ENCODE measurements at regions of chr1 and their contacts with region 1.

Region 1: DNA sequence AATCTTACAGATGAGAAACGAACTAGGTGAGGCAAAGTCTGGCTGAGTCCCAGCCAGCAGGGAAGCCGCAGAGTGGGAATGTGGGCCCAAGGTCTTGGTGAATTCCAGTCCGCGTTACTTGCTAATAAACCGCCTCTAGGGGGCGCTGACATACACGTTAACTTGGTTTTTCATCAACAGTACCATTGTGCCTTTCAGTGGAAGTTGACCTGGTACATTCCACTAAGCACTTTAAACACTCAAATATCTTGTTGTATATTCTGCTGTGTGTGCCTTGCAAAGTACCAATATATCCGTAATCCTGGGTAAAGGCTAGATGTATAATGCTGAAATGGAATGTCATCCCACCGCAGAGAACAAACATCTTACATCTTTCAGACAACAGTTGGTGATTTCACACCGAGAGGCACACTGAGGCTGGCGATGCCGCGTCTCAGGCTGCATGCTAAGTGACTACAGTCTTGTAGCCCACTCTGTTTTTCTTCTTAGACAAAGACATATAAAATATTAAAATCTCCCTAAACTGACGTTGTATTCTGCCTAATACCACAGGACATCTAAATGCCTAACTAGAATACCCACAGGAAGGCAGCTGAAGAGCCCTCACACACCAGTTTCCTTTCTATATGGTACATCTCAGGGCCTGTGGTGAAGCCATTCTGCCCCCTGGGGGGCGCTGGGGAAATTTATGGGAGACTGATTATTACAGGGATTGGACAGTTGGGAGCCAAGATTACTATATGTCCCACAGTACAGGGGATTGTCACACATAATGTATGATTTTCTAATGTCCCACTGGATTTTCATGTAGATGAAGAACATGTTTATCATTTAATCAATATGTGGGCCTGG is 49.2 kb upstream of the C1orf198 start:
- DNase-seq: peak in 8 of 10 donors; percentile 66 to 94 (median 76)

Region 2: GRCh38 chr1:230797942-230798418 is 119.5 kb before region 1 on chr1:
- intact Hi-C with region 1: loop called (anchors 1 kb)
- DNase-seq: peak; percentile 49 to 95 (median 73)

Region 3: DNA sequence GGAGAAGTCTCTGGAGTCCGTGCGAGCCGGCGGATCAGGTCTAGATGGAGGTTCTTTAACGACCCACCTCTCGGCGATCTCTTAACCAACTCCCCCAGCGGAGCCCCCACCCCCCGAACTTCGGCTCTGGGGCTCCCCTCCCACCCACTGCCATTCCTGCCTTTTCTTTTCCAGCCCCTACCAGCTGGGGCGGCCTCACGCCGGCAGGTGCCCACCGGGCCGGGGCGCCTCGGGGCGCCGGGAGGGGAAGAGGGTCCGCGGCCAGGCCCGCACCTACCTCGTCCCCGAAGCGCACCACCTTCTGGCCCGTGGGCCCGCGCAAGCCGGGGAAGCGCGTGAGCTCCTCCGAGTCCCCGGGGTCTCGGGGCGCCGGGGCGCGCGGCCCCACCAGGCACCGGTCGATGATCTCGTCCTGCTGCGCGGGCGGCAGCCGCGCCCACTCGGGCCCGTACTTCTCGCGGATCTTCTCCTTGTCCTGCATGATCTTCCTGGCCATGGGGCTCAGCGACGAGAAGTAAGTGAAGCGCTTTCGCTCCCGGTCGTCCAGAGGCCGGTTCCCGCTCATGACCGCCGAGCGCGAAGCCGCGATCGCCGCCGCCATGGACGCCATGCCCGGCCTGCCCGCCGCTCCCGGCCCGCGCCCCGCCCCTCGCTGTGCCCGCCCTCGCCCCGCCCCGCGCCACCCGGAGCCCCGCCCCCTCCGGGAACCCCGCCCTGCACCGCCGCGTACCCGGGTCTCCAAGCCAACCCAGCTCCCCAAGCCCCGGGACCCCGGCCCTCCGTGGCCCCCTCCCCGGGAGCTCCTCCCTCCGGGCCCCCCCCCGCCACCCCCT is 49.4 kb before region 1 on chr1 and contains the start of gene C1orf198:
- intact Hi-C with region 1: loop called (anchors 2 kb)
- DNase-seq: peak; percentile 71 to 97 (median 82)

Region 4: GRCh38 chr1:230978491-230979388 is 61.2 kb after region 1 on chr1 and contains the starts of genes ARV1 and TTC13:
- intact Hi-C with region 1: loop called (anchors 10 kb)
- DNase-seq: peak; percentile 93 to 100 (median 99)

Region 5: GRCh38 chr1:231124746-231125145 is 207.2 kb after region 1 on chr1:
- intact Hi-C with region 1: no loop called
- DNase-seq: peak in 4 of 10 donors; percentile 16 to 81 (median 43)